CD14-positive monocyte (primary cell): ENCODE measurements at regions of chr6 and their contacts with region 1.

Region 1: GRCh38 chr6:106444777-106445507 is 84.4 kb downstream of the CRYBG1 start:
- DNase-seq: peak; percentile 66 to 81 (median 77)
- H3K4me3 ChIP-seq: no peak overlapping the region
- H3K4me3 Mint-ChIP-seq: no peak overlapping the region
- H3K27ac ChIP-seq: no peak overlapping the region
- H3K27ac Mint-ChIP-seq: peak overlapping the region in 1 of 7 donors; percentile 18
- H3K4me1 ChIP-seq: peaks cover 25 to 26% of the 10 kb centered on the region in 2 donors
- H3K4me1 Mint-ChIP-seq: peaks cover 26% of the 10 kb centered on the region
- H3K27me3 ChIP-seq: peaks cover 7 to 9% of the 10 kb centered on the region in 2 donors
- H3K27me3 Mint-ChIP-seq: peaks cover 12 to 23% (median 15%) of the 10 kb centered on the region in 3 donors
- CTCF ChIP-seq: peak; percentile 82

Region 2: GRCh38 chr6:106360410-106360988 is 84.4 kb before region 1 on chr6 and contains the start of gene CRYBG1:
- intact Hi-C with region 1: no loop called
- DNase-seq: peak in 2 of 3 donors; percentile 33 to 44
- H3K4me3 ChIP-seq: peak within 1 kb of the TSS; percentile 18 to 74 (median 41)
- H3K4me3 Mint-ChIP-seq: peak within 1 kb of the TSS; percentile 81 to 91
- H3K27ac ChIP-seq: no peak within 1 kb of the TSS
- H3K27ac Mint-ChIP-seq: peak within 1 kb of the TSS in 1 of 7 donors; percentile 10
- H3K4me1 ChIP-seq: peaks cover 13 to 17% of the 10 kb centered on the region in 2 donors
- H3K4me1 Mint-ChIP-seq: peaks cover 12% of the 10 kb centered on the region
- H3K27me3 ChIP-seq: peaks cover 21 to 58% of the 10 kb centered on the region in 2 donors
- H3K27me3 Mint-ChIP-seq: peaks cover 38 to 68% (median 53%) of the 10 kb centered on the region in 3 donors
- CTCF ChIP-seq: peak; percentile 99
- polyA plus RNA-seq, gene CRYBG1: 7.9 to 11.9 (median 11.1) TPM

Region 3: DNA sequence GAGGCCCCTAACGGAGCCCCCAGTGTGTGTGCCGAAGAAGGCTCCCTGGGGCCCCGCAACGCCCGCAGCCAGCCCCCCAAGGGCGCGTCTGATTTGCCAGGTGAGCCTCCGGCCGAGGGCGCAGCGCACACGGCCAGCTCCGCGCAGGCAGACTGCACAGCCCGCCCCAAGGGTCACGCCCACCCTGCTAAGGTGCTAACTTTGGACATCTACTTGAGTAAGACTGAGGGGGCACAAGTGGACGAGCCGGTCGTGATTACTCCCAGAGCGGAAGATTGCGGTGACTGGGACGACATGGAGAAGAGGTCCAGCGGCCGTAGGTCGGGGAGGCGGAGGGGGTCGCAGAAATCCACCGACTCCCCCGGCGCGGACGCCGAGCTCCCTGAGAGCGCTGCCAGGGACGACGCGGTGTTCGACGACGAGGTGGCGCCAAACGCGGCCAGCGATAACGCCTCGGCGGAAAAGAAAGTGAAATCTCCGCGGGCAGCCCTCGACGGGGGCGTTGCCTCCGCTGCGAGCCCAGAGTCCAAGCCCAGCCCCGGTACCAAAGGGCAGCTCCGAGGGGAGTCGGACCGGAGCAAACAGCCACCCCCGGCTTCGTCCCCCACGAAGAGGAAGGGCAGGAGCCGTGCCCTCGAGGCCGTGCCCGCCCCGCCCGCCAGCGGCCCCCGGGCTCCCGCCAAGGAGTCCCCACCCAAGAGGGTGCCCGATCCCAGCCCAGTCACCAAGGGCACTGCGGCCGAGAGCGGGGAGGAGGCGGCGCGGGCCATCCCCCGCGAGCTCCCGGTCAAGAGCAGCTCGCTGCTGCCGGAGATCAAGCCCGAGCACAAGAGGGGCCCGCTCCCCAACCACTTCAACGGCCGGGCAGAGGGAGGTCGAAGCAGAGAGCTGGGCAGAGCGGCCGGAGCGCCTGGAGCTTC is 67.4 kb after region 1 on chr6:
- intact Hi-C with region 1: loop called (anchors 2 to 5 kb)
- DNase-seq: peak; percentile 68 to 69 (median 68)
- H3K4me3 ChIP-seq: peak overlapping the region; percentile 87 to 95 (median 87)
- H3K4me3 Mint-ChIP-seq: peak overlapping the region; percentile 93 to 98
- H3K27ac ChIP-seq: peak overlapping the region; percentile 94 to 97
- H3K27ac Mint-ChIP-seq: peak overlapping the region; percentile 91 to 98 (median 96)
- H3K4me1 ChIP-seq: peaks cover 58 to 68% of the 10 kb centered on the region in 2 donors
- H3K4me1 Mint-ChIP-seq: peaks cover 66% of the 10 kb centered on the region
- H3K27me3 ChIP-seq: no peaks in the 10 kb centered on the region
- H3K27me3 Mint-ChIP-seq: no peaks in the 10 kb centered on the region
- CTCF ChIP-seq: peak; percentile 55

Region 4: GRCh38 chr6:106525111-106525881 is 80.4 kb after region 1 on chr6:
- intact Hi-C with region 1: no loop called
- DNase-seq: no peak
- H3K4me3 ChIP-seq: peak overlapping the region in 1 of 3 experiments; percentile 40
- H3K4me3 Mint-ChIP-seq: peak overlapping the region; percentile 21 to 35
- H3K27ac ChIP-seq: peak overlapping the region in 1 of 2 donors; percentile 100
- H3K27ac Mint-ChIP-seq: peak overlapping the region; percentile 18 to 88 (median 57)
- H3K4me1 ChIP-seq: peaks cover 50 to 63% of the 10 kb centered on the region in 2 donors
- H3K4me1 Mint-ChIP-seq: peaks cover 60% of the 10 kb centered on the region
- H3K27me3 ChIP-seq: no peaks in the 10 kb centered on the region
- H3K27me3 Mint-ChIP-seq: peaks cover 0 to 1% (median 0%) of the 10 kb centered on the region in 3 donors
- CTCF ChIP-seq: no peak

Region 5: GRCh38 chr6:106574741-106575458 is 130.0 kb after region 1 on chr6:
- intact Hi-C with region 1: loop called in 1 of 2 experiments (anchors 2 kb)
- DNase-seq: peak in 1 of 3 donors; percentile 15
- H3K4me3 ChIP-seq: no peak overlapping the region
- H3K4me3 Mint-ChIP-seq: no peak overlapping the region
- H3K27ac ChIP-seq: no peak overlapping the region
- H3K27ac Mint-ChIP-seq: no peak overlapping the region
- H3K4me1 ChIP-seq: peaks cover 13 to 15% of the 10 kb centered on the region in 2 donors
- H3K4me1 Mint-ChIP-seq: peaks cover 23% of the 10 kb centered on the region
- H3K27me3 ChIP-seq: no peaks in the 10 kb centered on the region
- H3K27me3 Mint-ChIP-seq: peaks cover 0 to 7% (median 0%) of the 10 kb centered on the region in 3 donors
- CTCF ChIP-seq: no peak

Region 6: GRCh38 chr6:106979427-106979884 is 534.5 kb after region 1 on chr6:
- intact Hi-C with region 1: loop called (anchors 2 to 5 kb)
- DNase-seq: peak; percentile 69 to 74 (median 70)
- H3K4me3 ChIP-seq: no peak overlapping the region
- H3K4me3 Mint-ChIP-seq: peak overlapping the region in 1 of 2 donors; percentile 26
- H3K27ac ChIP-seq: no peak overlapping the region
- H3K27ac Mint-ChIP-seq: no peak overlapping the region
- H3K4me1 ChIP-seq: peaks cover 7 to 12% of the 10 kb centered on the region in 2 donors
- H3K4me1 Mint-ChIP-seq: peaks cover 4% of the 10 kb centered on the region
- H3K27me3 ChIP-seq: peaks cover 22 to 36% of the 10 kb centered on the region in 2 donors
- H3K27me3 Mint-ChIP-seq: peaks cover 31 to 51% (median 38%) of the 10 kb centered on the region in 3 donors
- CTCF ChIP-seq: peak; percentile 87

Region 7: GRCh38 chr6:107459283-107460082 is 1014.5 kb after region 1 on chr6 and contains the start of gene PDSS2:
- intact Hi-C with region 1: loop called in 1 of 2 experiments (anchors 10 kb)
- DNase-seq: peak; percentile 89 to 94 (median 92)
- H3K4me3 ChIP-seq: peak within 1 kb of the TSS; percentile 74 to 98 (median 77)
- H3K4me3 Mint-ChIP-seq: peak within 1 kb of the TSS; percentile 95 to 97
- H3K27ac ChIP-seq: peak within 1 kb of the TSS; percentile 90 to 92
- H3K27ac Mint-ChIP-seq: peak within 1 kb of the TSS; percentile 95 to 98 (median 98)
- H3K4me1 ChIP-seq: peaks cover 15 to 23% of the 10 kb centered on the region in 2 donors
- H3K4me1 Mint-ChIP-seq: peaks cover 17% of the 10 kb centered on the region
- H3K27me3 ChIP-seq: no peaks in the 10 kb centered on the region
- H3K27me3 Mint-ChIP-seq: no peaks in the 10 kb centered on the region
- CTCF ChIP-seq: peak; percentile 41
- polyA plus RNA-seq, gene PDSS2: 10.1 to 13.9 (median 13.3) TPM